ENCODE measurements at regions of chr16 and their contacts with region 1.

Region 1: GRCh38 chr16:2926650-2927646 is 15.2 kb downstream of the FLYWCH1 start:
- DNase-seq: peak in 1 of 2 experiments; percentile 93
- H3K4me3 ChIP-seq: no peak overlapping the region
- H3K27ac ChIP-seq: no peak overlapping the region
- H3K4me1 ChIP-seq: peaks cover 4 to 15% (median 10%) of the 10 kb centered on the region in 4 experiments
- H3K27me3 ChIP-seq: no peaks in the 10 kb centered on the region
- CTCF ChIP-seq: peak; percentile 83 to 97 (median 96)
- EP300 ChIP-seq: no peak
- POLR2A ChIP-seq: no peak
- RAD21 ChIP-seq: peak; percentile 85 to 92

Region 2: DNA sequence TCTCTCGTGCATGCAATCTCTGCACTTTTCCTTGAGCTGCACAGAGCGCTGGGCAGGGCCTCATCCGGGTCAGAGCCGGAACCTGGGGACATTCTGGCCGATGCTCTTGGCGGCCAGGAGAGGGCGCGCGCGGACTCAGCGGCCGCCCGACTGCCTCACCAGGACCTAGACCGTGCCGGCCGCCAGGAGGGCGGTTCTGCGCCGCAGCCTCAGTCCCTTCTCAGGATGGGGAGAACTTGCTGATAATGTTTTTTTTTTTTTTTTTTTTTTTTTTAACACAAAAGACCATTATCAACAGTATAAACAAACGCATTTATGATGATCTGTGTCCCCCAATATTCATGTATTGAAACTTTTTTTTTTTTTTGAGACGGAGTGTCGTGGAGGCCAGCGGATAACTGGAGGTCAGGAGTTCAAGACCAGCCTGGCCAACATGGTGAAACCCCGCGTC is 52.0 kb before region 1 on chr16:
- CTCF ChIA-PET with region 1: interaction called, 10 read pairs
- POLR2A ChIA-PET with region 1: no interaction called
- DNase-seq: peak in 1 of 2 experiments; percentile 76
- H3K4me3 ChIP-seq: no peak overlapping the region
- H3K27ac ChIP-seq: no peak overlapping the region
- H3K4me1 ChIP-seq: no peaks in the 10 kb centered on the region; a peak in 1 of 7 replicates
- H3K27me3 ChIP-seq: peaks cover 0 to 3% (median 2%) of the 10 kb centered on the region in 4 experiments; a peak in 4 of 7 replicates
- CTCF ChIP-seq: peak; percentile 92 to 98 (median 93)
- EP300 ChIP-seq: no peak
- POLR2A ChIP-seq: no peak
- RAD21 ChIP-seq: peak; percentile 62 to 75

Region 3: GRCh38 chr16:2883027-2883851 is 43.7 kb before region 1 on chr16 and contains the start of gene FLYWCH2:
- CTCF ChIA-PET with region 1: interaction called, 10 read pairs
- POLR2A ChIA-PET with region 1: no interaction called
- DNase-seq: peak; percentile 92 to 100
- H3K4me3 ChIP-seq: peak within 1 kb of the TSS; percentile 81 to 89 (median 84)
- H3K27ac ChIP-seq: peak within 1 kb of the TSS; percentile 72; the same call in 1 of the 2 replicates
- H3K4me1 ChIP-seq: peaks cover 0 to 1% (median 0%) of the 10 kb centered on the region in 4 experiments; a peak in 3 of 7 replicates
- H3K27me3 ChIP-seq: no peaks in the 10 kb centered on the region; a peak in 1 of 7 replicates
- CTCF ChIP-seq: no peak
- EP300 ChIP-seq: no peak
- POLR2A ChIP-seq: 0 out of 3 replicates have a peak, but pooled peaks of 1 of the 2 experiments have one; percentile 39
- RAD21 ChIP-seq: no peak
- total RNA-seq, gene FLYWCH2: 16.4 and 20.2 TPM in 2 replicates

Region 4: GRCh38 chr16:2905431-2906387 is 21.2 kb before region 1 on chr16:
- CTCF ChIA-PET with region 1: interaction called, 98 read pairs
- POLR2A ChIA-PET with region 1: interaction called, 3 read pairs
- DNase-seq: peak; percentile 99 to 100
- H3K4me3 ChIP-seq: peak overlapping the region; percentile 56 to 85 (median 70); a peak in 6 of 8 replicates
- H3K27ac ChIP-seq: no peak overlapping the region
- H3K4me1 ChIP-seq: peaks cover 0 to 2% (median 0%) of the 10 kb centered on the region in 4 experiments; a peak in 2 of 7 replicates
- H3K27me3 ChIP-seq: no peaks in the 10 kb centered on the region
- CTCF ChIP-seq: no peak
- EP300 ChIP-seq: no peak
- POLR2A ChIP-seq: no peak
- RAD21 ChIP-seq: no peak

Region 5: GRCh38 chr16:2911580-2912329 is 15.2 kb before region 1 on chr16 and contains the start of gene FLYWCH1:
- CTCF ChIA-PET with region 1: interaction called, 98 read pairs
- POLR2A ChIA-PET with region 1: interaction called, 5 read pairs
- DNase-seq: peak; percentile 96 to 99
- H3K4me3 ChIP-seq: peak within 1 kb of the TSS; percentile 61 to 87 (median 73)
- H3K27ac ChIP-seq: no peak within 1 kb of the TSS
- H3K4me1 ChIP-seq: peaks cover 0 to 6% (median 2%) of the 10 kb centered on the region in 4 experiments; a peak in 3 of 7 replicates
- H3K27me3 ChIP-seq: peaks cover 0 to 9% (median 8%) of the 10 kb centered on the region in 4 experiments; a peak in 5 of 7 replicates
- CTCF ChIP-seq: no peak
- EP300 ChIP-seq: 0 out of 3 replicates have a peak, but pooled peaks of 1 of the 2 experiments have one; percentile 15
- POLR2A ChIP-seq: 0 out of 3 replicates have a peak, but pooled peaks of 1 of the 2 experiments have one; percentile 28
- RAD21 ChIP-seq: no peak
- total RNA-seq, gene FLYWCH1: 23.1 and 23.5 TPM in 2 replicates

Region 6: DNA sequence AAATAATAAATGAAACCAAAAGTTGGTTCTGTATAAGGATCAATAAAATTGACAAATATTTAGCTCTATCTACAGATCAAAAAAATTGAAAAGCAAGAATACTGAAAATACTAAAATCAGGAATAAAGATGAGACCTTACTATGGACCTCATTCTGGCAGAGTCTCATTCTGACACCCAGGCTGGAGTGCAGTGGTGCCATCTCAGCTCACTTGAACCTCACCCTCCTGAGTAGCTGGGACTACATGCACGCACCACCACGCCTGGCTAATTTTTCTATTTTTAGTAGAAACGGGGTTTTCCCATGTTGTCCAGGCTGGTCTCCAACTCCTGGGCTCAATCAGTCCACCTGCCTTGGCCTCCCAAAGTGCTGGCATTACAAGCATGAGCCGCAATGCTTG is 15.1 kb after region 1 on chr16:
- CTCF ChIA-PET with region 1: interaction called, 28 read pairs
- POLR2A ChIA-PET with region 1: interaction called, 3 read pairs
- DNase-seq: no peak
- H3K4me3 ChIP-seq: no peak overlapping the region
- H3K27ac ChIP-seq: no peak overlapping the region
- H3K4me1 ChIP-seq: no peaks in the 10 kb centered on the region; a peak in 1 of 7 replicates
- H3K27me3 ChIP-seq: no peaks in the 10 kb centered on the region
- CTCF ChIP-seq: no peak
- EP300 ChIP-seq: no peak
- POLR2A ChIP-seq: no peak
- RAD21 ChIP-seq: no peak

Region 7: DNA sequence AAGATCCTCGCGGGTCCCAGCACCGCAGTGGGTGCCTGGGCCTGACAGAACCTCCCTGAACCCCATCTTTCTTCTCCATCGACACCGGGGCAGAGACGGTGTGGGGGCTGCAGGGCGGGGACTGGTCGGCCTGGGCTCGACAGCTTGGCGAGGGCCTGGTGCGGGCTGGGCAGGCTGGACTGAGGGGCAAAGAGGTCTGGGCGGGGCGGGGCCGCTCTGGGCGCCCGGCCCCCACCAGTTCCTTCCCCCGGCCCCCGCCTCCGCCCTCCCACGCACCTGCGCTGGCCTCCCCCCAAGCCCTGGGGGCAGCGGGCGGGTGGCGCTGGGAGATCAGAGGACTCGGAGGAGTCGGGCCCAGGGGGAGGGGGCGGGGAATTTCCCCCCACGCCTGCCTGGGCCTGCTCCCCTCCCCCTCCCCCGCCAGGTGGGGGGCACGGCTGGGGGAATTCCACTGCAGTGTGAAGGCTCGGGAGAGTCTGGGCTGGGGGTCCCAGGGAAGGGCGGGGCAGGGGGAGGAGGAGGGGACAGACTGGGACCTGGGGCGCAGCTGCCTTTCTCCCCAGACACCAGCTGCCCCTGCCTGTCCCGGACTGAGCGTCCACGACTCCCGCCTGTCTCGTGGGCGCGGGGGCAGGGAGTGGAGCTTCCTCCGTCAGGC is 36.2 kb after region 1 on chr16:
- CTCF ChIA-PET with region 1: interaction called, 15 read pairs
- POLR2A ChIA-PET with region 1: interaction called, 3 read pairs
- DNase-seq: no peak
- H3K4me3 ChIP-seq: peak overlapping the region; percentile 39 to 80 (median 59)
- H3K27ac ChIP-seq: no peak overlapping the region; the same call in 1 of the 2 replicates
- H3K4me1 ChIP-seq: peaks cover 0 to 21% (median 12%) of the 10 kb centered on the region in 4 experiments; a peak in 5 of 7 replicates
- H3K27me3 ChIP-seq: peaks cover 15 to 25% (median 20%) of the 10 kb centered on the region in 4 experiments; a peak in 6 of 7 replicates
- CTCF ChIP-seq: no peak
- EP300 ChIP-seq: no peak
- POLR2A ChIP-seq: no peak
- RAD21 ChIP-seq: no peak